Mucosa of descending colon (tissue), 3 donors: ENCODE measurements at regions of chr4 and their contacts with region 1.

Region 1: DNA sequence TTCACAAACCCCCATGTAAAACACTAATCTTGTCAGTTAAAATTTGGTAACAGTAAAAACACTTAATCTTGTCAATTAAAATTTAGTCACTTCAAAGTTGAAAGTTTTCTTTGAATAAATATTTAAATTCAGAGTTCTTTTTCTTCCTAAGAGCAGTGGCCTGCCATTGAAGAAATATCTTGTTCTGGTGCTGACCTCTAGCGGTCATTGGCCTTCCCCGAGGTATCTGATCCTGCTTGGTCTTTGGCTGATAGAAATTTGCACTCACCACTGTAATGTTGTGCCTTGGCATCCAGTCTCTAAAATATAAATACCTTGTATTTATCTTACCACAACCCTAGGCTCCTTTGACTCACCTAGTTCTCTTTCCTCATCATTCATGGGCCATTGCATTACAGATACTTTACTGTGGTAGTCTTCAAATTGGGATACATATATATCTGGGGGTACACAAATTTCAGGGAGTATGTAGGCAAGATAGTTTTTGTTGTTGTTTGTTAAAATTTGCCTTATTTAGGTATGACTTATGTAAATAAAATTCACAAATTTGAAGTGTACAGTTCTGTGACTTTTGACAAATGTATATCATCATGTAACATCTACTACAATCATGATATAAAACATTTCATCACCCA is 6.7 kb upstream of the ART3 start:
- DNase-seq: peak in 2 of 3 donors; percentile 70 to 95
- ATAC-seq: peak; percentile 92
- H3K4me3 ChIP-seq: no peak overlapping the region
- H3K4me1 ChIP-seq: no peaks in the 10 kb centered on the region
- CTCF ChIP-seq: peak; percentile 75

Region 2: DNA sequence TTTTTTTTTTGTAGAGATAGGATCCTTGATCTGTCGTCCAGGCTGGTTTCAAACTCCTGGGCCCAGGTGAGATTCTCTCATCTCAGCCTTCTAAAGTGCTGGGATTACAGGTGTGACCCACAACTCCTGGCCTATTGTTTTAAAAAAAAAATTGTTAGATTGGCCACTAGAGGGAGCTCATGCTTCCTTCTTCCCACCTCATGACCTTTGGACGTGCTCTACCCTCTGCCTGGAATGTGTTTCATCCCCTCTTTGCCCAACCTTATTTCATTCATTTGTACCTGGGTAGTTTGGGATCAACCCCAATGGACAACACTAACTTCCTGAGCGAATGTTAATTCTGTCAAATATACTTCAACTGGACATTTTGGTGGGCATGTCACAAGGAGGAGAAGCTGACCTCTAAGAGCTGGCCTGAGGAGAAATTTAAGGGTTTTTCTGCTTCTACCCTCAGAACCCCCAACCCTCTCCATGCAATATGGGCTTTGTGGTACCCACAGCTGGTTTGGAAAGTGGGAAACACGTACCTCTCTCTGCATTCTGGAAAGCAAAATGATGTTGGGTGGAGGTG is 171.9 kb before region 1 on chr4:
- intact Hi-C with region 1: loop called in 1 of 2 experiments (anchors 10 kb)
- DNase-seq: peak in 1 of 3 donors; percentile 29
- ATAC-seq: peak; percentile 92
- H3K4me3 ChIP-seq: no peak overlapping the region
- H3K4me1 ChIP-seq: no peaks in the 10 kb centered on the region
- CTCF ChIP-seq: no peak

Region 3: GRCh38 chr4:75995727-75996126 is 72.0 kb before region 1 on chr4:
- intact Hi-C with region 1: loop called (anchors 5 kb)
- DNase-seq: peak in 1 of 3 donors; percentile 16
- ATAC-seq: peak; percentile 60
- H3K4me3 ChIP-seq: no peak overlapping the region
- H3K4me1 ChIP-seq: peaks cover 8% of the 10 kb centered on the region
- CTCF ChIP-seq: no peak